ENCODE measurements at regions of chr19 and their contacts with region 1.

Region 1: GRCh38 chr19:53792721-53793433 is 31.2 kb downstream of the NLRP12 start:
- DNase-seq: peak; percentile 86
- ATAC-seq: peak; percentile 100
- H3K4me3 Mint-ChIP-seq: no peak overlapping the region
- H3K27ac Mint-ChIP-seq: no peak overlapping the region
- H3K4me1 Mint-ChIP-seq: no peaks in the 10 kb centered on the region
- H3K27me3 Mint-ChIP-seq: no peaks in the 10 kb centered on the region

Region 2: DNA sequence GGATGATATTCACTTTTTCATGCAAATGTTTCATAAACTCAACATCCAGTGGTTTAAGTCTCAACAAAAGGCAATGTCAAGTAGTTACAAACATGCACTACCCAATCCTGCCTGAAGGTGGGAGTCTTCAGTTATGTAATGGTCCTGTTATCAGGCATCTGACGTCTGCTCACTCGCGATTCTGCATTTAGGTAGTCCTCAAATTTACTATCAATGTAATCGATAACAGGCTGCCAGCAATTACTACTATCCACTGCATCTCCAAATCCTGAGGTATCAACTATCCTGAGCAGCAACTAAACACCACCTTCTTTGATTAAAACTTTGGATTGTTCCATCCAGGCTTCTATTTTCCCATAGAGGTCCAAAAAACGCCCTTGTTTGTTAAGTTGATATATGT is 19.9 kb before region 1 on chr19:
- CTCF ChIA-PET with region 1: interaction called, 14 read pairs
- DNase-seq: peak; percentile 63
- ATAC-seq: no peak
- H3K4me3 Mint-ChIP-seq: no peak overlapping the region
- H3K27ac Mint-ChIP-seq: no peak overlapping the region
- H3K4me1 Mint-ChIP-seq: peaks cover 1% of the 10 kb centered on the region
- H3K27me3 Mint-ChIP-seq: no peaks in the 10 kb centered on the region

Region 3: GRCh38 chr19:53808710-53809125 is 15.8 kb after region 1 on chr19:
- CTCF ChIA-PET with region 1: interaction called, 18 read pairs
- DNase-seq: no peak
- ATAC-seq: no peak
- H3K4me3 Mint-ChIP-seq: no peak overlapping the region
- H3K27ac Mint-ChIP-seq: no peak overlapping the region
- H3K4me1 Mint-ChIP-seq: no peaks in the 10 kb centered on the region
- H3K27me3 Mint-ChIP-seq: no peaks in the 10 kb centered on the region

Region 4: GRCh38 chr19:54023191-54023590 is 230.3 kb after region 1 on chr19:
- CTCF ChIA-PET with region 1: interaction called, 67 read pairs
- DNase-seq: no peak
- ATAC-seq: no peak
- H3K4me3 Mint-ChIP-seq: no peak overlapping the region
- H3K27ac Mint-ChIP-seq: no peak overlapping the region
- H3K4me1 Mint-ChIP-seq: peaks cover 14% of the 10 kb centered on the region
- H3K27me3 Mint-ChIP-seq: peaks cover 18% of the 10 kb centered on the region

Region 5: DNA sequence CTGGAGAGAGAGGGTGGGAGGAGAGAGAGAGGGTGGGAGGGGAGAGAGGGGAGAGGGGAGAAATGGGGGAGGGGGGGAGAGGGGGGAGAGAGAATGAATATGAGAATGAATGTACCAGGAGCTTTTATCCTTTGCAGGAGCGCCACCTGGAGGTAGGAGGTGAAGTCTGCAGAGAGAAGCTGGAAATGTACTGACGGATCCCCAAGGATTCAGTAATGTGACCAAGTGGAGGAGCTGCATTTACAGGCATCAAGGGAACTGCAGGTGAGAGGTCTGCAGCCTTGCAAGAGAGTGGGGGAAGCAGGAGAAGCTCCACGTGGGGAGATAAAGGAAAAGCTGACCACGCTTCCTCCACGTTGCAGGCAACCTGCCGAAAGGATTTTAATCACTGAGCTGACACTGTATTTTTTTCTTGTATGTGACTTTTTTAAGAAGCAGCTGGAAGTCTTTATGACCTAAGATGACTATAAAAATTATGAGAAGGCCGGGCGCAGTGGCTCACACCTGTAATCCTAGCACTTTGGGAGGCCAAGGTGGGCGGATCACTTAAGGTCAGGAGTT is 237.1 kb after region 1 on chr19:
- CTCF ChIA-PET with region 1: interaction called, 67 read pairs
- DNase-seq: peak; percentile 67
- ATAC-seq: no peak
- H3K4me3 Mint-ChIP-seq: no peak overlapping the region
- H3K27ac Mint-ChIP-seq: no peak overlapping the region
- H3K4me1 Mint-ChIP-seq: peaks cover 2% of the 10 kb centered on the region
- H3K27me3 Mint-ChIP-seq: peaks cover 10% of the 10 kb centered on the region